Activated B cell treated with CpG ODN at 0.5 μM for 24 hours (primary cell): ENCODE measurements at regions of chr7 and their contacts with region 1.

Region 1: GRCh38 chr7:116525913-116526861 is 1.4 kb downstream of the CAV1 start:
- DNase-seq: peak; percentile 74
- ATAC-seq: peak; percentile 91
- H3K4me3 Mint-ChIP-seq: peak overlapping the region; percentile 90
- H3K27ac Mint-ChIP-seq: peak overlapping the region; percentile 71
- H3K4me1 Mint-ChIP-seq: peaks cover 19% of the 10 kb centered on the region
- H3K27me3 Mint-ChIP-seq: peaks cover 38% of the 10 kb centered on the region
- CTCF ChIP-seq: peak; percentile 68

Region 2: DNA sequence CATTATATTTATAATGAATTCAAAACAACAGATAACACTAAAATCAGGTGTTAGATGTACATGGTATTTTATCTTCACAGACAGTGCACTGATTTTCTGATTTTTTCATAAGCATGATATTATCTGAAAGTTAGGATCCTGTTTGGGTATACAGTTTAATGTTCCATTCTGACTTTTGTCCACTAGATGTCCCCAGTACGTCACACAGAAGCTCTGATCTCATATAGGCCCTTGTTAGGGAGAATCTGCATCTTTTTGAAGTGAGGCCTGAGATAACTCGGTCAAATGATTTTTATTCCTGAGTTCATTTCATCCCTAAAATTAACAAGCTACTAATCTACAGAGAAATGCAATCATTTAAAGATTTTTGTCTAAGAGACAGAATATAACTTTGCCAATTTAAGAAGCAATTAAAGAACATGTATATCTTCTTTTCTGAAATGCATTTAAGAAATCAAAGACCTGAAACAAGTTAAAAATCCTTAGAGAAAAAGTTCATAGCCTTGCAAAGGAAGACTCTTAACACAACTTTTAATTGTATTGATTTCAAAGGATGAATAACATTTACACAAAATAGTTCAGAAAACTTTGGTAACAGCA is 387.9 kb before region 1 on chr7:
- CTCF ChIA-PET with region 1: interaction called, 4 read pairs
- POLR2A ChIA-PET with region 1: no interaction called
- intact Hi-C with region 1: loop called (anchors 1 kb)
- DNase-seq: no peak
- ATAC-seq: peak; percentile 91
- H3K4me3 Mint-ChIP-seq: no peak overlapping the region
- H3K27ac Mint-ChIP-seq: no peak overlapping the region
- H3K4me1 Mint-ChIP-seq: peaks cover 33% of the 10 kb centered on the region
- H3K27me3 Mint-ChIP-seq: no peaks in the 10 kb centered on the region
- CTCF ChIP-seq: peak; percentile 48

Region 3: GRCh38 chr7:116211006-116211912 is 314.9 kb before region 1 on chr7:
- CTCF ChIA-PET with region 1: no interaction called
- POLR2A ChIA-PET with region 1: interaction called, 3 read pairs
- intact Hi-C with region 1: loop called (anchors 1 kb)
- DNase-seq: peak; percentile 52
- ATAC-seq: peak; percentile 71
- H3K4me3 Mint-ChIP-seq: peak overlapping the region; percentile 98
- H3K27ac Mint-ChIP-seq: peak overlapping the region; percentile 96
- H3K4me1 Mint-ChIP-seq: peaks cover 52% of the 10 kb centered on the region
- H3K27me3 Mint-ChIP-seq: no peaks in the 10 kb centered on the region
- CTCF ChIP-seq: no peak

Region 4: DNA sequence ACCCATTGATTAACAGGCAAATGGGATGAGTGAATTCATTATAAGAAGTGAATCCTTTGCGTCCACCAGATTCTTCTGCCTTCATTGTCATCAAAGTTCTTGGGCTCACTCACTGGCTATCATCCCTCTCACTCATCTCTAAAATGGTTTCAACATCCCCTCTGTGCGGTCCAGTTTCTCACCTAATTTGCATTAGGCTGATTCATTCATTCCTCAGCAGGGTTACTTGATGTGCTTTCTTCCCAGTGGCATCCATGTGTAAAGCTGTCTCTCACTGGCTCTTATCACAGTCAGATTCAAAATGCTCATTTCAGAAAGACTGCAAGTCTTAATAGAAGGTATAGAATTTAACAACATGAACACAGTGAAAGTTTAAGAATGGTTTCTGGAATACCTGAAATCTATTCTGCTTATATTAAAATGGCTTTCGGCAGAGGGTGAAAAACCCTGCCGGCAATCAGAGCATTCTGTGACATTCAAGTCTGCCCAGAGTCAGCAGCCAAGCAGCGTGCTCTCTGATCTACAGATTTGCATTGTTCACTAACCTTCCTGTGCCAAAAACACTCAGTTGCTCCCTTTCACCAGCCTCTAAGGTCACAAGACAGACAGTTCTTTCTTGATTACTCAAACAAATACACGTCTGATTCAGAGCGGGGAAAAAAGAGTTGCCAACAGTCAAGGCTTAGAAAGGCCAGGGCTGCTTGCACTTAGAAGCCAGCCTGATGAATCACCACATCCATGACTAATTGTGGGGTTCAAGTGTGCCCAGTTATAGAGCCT is 209.2 kb before region 1 on chr7:
- CTCF ChIA-PET with region 1: no interaction called
- POLR2A ChIA-PET with region 1: no interaction called
- intact Hi-C with region 1: loop called (anchors 5 kb)
- DNase-seq: no peak
- ATAC-seq: peak; percentile 74
- H3K4me3 Mint-ChIP-seq: peak overlapping the region; percentile 42
- H3K27ac Mint-ChIP-seq: peak overlapping the region; percentile 80
- H3K4me1 Mint-ChIP-seq: peaks cover 24% of the 10 kb centered on the region
- H3K27me3 Mint-ChIP-seq: peaks cover 5% of the 10 kb centered on the region
- CTCF ChIP-seq: no peak

Region 5: GRCh38 chr7:116395125-116395791 is 130.9 kb before region 1 on chr7:
- CTCF ChIA-PET with region 1: no interaction called
- POLR2A ChIA-PET with region 1: no interaction called
- intact Hi-C with region 1: no loop called
- DNase-seq: no peak
- ATAC-seq: no peak
- H3K4me3 Mint-ChIP-seq: no peak overlapping the region
- H3K27ac Mint-ChIP-seq: no peak overlapping the region
- H3K4me1 Mint-ChIP-seq: no peaks in the 10 kb centered on the region
- H3K27me3 Mint-ChIP-seq: peaks cover 2% of the 10 kb centered on the region
- CTCF ChIP-seq: no peak

Region 6: DNA sequence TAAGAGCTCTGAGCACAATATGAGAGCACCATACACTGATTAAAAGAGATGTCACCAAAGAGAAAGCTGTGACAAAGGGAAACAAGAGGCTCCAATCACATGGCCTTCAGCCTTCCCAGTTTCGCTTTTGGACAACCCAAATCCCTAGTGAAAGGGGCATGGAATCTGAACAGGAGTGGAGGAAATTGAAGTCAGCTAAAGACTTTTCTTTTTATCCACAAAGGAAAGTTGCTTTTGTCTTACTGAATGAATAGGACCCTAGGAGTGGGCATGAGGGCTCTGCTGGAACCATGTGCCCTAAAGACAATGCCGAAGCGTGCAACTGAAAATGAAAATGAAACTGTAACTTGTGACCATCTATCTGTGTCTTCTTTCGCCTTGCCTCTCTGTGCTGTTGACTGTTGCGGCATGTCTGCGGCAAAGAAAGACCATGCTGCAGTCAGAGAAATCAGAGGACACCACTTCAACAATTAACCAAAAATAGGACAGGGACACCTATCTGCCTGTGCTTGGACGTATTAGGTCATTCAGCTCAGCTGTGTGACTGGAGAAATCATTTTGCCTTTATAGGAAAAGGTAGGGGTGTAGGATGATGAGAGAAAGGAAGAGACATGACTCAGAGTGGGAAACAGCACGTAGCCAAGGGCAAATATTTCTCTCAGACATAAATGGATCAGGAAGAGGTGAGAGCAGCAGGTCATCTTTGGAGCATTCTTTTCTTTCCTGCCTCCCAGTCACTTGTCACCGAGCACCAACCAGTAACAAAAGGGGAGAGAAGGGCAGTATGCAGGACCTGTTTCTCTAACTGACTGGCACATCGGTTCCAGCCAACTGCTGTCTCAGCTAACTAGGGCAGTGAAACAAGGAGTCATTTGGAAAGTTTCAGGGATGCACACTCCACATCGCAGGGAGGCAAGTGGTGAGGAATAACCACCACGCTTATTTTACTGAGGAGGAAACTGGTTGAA is 14.4 kb before region 1 on chr7:
- CTCF ChIA-PET with region 1: interaction called, 10 read pairs
- POLR2A ChIA-PET with region 1: no interaction called
- intact Hi-C with region 1: loop called (anchors 1 kb)
- DNase-seq: no peak
- ATAC-seq: peak; percentile 92
- H3K4me3 Mint-ChIP-seq: peak overlapping the region; percentile 78
- H3K27ac Mint-ChIP-seq: peak overlapping the region; percentile 77
- H3K4me1 Mint-ChIP-seq: peaks cover 12% of the 10 kb centered on the region
- H3K27me3 Mint-ChIP-seq: peaks cover 13% of the 10 kb centered on the region
- CTCF ChIP-seq: no peak

Region 7: GRCh38 chr7:116786791-116787443 is 260.7 kb after region 1 on chr7:
- CTCF ChIA-PET with region 1: interaction called, 4 read pairs
- POLR2A ChIA-PET with region 1: no interaction called
- intact Hi-C with region 1: loop called (anchors 5 kb)
- DNase-seq: no peak
- ATAC-seq: peak; percentile 97
- H3K4me3 Mint-ChIP-seq: no peak overlapping the region
- H3K27ac Mint-ChIP-seq: no peak overlapping the region
- H3K4me1 Mint-ChIP-seq: no peaks in the 10 kb centered on the region
- H3K27me3 Mint-ChIP-seq: peaks cover 2% of the 10 kb centered on the region
- CTCF ChIP-seq: no peak

Region 8: GRCh38 chr7:116862234-116862950 is 336.2 kb after region 1 on chr7 and contains the start of gene CAPZA2:
- CTCF ChIA-PET with region 1: no interaction called
- POLR2A ChIA-PET with region 1: no interaction called
- intact Hi-C with region 1: loop called (anchors 5 kb)
- DNase-seq: peak; percentile 98
- ATAC-seq: peak; percentile 87
- H3K4me3 Mint-ChIP-seq: peak within 1 kb of the TSS; percentile 98
- H3K27ac Mint-ChIP-seq: peak within 1 kb of the TSS; percentile 93
- H3K4me1 Mint-ChIP-seq: peaks cover 39% of the 10 kb centered on the region
- H3K27me3 Mint-ChIP-seq: peaks cover 5% of the 10 kb centered on the region
- CTCF ChIP-seq: no peak
- total RNA-seq, gene CAPZA2: 101 and 110 TPM in 2 replicates